HAP-1 (cell line): ENCODE measurements at regions of chr2 and their contacts with region 1.

Region 1: DNA sequence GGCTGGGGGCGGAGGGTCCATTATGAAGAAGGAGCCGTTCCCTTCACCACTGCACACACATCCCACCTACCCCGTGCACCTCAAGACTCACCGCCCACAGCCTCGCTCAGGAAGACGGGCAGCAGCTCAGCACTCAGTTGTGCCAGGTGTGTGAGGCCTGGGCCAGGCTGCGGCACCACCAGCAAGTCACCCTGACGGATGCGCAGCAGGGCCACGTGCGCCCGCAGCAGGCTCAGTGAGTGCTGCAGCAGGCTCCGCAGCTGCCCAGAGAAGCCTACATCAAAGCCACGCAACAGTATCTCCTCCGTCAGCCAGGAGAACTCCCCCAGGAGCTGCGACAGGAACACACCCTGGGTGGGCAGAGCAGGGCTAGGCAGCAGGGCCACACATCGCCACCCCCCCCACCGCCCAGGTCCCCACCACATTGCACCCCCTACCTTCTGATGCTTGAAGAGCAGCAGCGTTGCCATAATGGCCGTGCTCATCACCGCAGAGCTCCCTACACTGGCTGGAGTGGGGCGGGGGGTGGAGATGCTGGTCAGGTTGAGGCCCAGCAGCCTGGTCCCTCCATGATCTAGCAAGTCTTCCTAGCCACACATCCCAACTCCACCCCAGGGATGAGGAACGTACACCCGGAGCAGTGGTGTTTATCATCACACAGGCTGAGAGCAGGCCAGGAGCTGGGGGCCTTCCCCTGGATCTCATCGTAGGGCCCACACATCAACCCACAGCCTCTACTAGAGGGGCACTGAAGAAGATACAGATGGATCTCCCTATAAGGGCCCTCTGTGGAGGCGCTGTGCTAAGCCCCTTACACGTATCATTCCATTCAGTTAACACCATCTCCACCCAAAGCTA is 10.2 kb downstream of the GPAT2 start:
- DNase-seq: no peak
- H3K4me3 ChIP-seq: no peak overlapping the region
- H3K4me1 ChIP-seq: no peaks in the 10 kb centered on the region
- H3K27me3 ChIP-seq: no peaks in the 10 kb centered on the region

Region 2: DNA sequence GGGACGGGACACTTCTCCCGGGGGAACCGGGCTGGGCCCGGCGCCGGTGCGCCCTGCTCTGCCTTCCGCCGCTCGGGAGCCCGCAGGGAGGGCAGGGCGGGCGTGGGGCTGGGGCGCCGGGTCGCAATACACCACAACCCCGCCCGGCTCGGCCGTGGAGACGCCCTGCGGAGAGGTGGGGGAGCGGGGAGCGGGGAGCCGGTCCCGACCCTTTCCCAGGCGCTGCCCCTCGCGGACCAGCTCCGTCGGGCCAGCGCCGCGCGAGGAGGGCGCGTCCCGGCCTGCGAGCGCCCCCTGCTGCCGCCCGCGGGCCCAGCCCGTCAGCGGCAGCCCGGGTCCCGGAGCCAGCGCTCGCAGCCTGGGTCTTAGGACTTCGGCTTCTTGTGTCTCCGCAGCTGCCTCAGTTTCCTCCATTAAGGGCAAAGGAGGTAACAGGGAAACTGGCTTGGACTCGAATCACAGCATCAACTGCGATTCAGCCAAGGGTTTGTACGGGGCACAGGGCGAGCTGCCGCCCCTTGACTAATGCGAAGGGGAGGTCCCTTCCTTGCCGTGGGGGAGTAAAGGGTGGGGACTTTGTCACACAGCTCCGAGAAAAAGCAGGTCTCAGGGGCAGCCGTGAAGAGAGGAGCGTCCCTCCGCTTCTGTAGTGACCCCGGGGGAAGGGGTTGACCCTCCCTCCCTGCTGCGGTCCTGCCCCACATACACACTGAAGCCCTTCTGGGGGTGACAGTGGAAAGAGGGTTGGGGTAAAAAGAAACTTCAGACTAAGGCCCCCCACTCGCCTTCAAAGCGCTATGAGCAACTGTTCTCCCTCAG is 92.5 kb after region 1 on chr2:
- in situ Hi-C with region 1: loop called (anchors 25 kb)
- DNase-seq: peak; percentile 60 to 76
- H3K4me3 ChIP-seq: peak overlapping the region; percentile 33
- H3K4me1 ChIP-seq: peaks cover 5% of the 10 kb centered on the region
- H3K27me3 ChIP-seq: peaks cover 8% of the 10 kb centered on the region

Region 3: DNA sequence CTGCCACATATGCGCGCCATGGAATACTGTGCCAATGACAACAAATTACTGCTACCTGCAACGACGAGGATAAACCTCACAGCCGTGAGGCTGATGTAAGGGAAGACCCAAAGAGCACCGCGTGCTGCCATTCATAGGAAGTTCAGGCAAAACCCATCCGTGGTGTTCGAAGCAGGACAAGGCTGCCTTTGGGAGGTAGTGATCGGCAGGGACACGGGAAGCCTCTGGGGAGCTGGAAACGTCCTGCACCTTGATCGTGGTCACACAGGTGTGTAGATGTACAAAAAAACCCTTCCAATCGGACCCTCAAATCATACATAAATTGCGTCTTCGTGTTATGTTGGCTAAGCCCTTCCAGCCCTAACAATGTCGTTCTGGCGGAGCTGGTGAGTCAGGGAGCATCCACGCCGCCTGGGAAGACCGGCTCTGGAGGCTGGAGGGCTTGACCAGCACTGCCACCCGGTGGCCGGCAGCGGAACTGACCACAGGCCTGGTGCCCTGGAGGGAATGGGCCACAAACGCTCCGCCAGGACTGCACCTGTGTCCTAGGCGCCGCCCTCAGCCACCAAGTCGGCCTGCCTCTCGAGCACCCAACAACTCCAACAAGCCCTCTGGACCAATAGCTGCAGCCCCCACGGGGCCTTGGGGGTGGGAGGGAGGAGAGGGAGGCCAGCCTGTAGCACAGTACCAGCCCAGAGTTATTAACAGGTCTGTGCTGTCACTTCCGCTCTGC is 484.7 kb after region 1 on chr2:
- in situ Hi-C with region 1: loop called (anchors 25 kb)
- DNase-seq: peak; percentile 84 to 94
- H3K4me3 ChIP-seq: no peak overlapping the region
- H3K4me1 ChIP-seq: peaks cover 8% of the 10 kb centered on the region; the same call in 1 of the 2 replicates
- H3K27me3 ChIP-seq: no peaks in the 10 kb centered on the region